ENCODE measurements at regions of chr15 and their contacts with region 1.

Region 1: GRCh38 chr15:74933573-74933972 is 4.3 kb downstream of the COX5A start:
- DNase-seq: no peak
- H3K4me3 ChIP-seq: no peak overlapping the region
- H3K27ac ChIP-seq: no peak overlapping the region
- H3K4me1 ChIP-seq: peaks cover 2% of the 10 kb centered on the region
- H3K27me3 ChIP-seq: no peaks in the 10 kb centered on the region
- CTCF ChIP-seq: no peak

Region 2: GRCh38 chr15:74983725-74984231 is 50.2 kb after region 1 on chr15:
- CTCF ChIA-PET with region 1: no interaction called
- dilution Hi-C with region 1: no loop called
- in situ Hi-C with region 1: no loop called
- intact Hi-C with region 1: no loop called
- DNase-seq: peak; percentile 68
- H3K4me3 ChIP-seq: no peak overlapping the region
- H3K27ac ChIP-seq: no peak overlapping the region
- H3K4me1 ChIP-seq: no peaks in the 10 kb centered on the region
- H3K27me3 ChIP-seq: no peaks in the 10 kb centered on the region
- CTCF ChIP-seq: no peak

Region 3: DNA sequence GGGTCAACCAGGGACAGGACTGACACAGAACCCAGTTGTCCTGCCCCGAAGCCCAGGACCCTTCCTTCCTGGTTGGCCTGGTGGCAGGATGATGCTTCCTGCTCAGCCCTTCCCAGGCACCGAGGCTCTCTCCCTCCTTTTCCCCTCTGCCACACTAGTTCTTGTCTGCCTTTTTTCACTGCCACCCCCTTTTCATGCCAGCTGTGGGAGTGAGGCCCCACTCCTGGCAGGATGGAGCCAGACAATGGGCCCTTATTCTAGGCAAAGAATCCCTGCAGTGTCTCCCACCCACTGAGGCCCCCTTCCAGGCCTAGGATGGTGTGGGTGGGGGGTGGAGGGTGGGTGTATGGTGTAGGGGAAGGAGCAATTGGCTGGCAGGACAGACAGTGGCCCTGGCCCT is 60.7 kb after region 1 on chr15:
- CTCF ChIA-PET with region 1: no interaction called
- dilution Hi-C with region 1: loop called (anchors 5 kb)
- in situ Hi-C with region 1: no loop called
- intact Hi-C with region 1: no loop called
- DNase-seq: no peak
- H3K4me3 ChIP-seq: no peak overlapping the region
- H3K27ac ChIP-seq: no peak overlapping the region
- H3K4me1 ChIP-seq: peaks cover 12% of the 10 kb centered on the region
- H3K27me3 ChIP-seq: peaks cover 5% of the 10 kb centered on the region
- CTCF ChIP-seq: no peak